Activated naive CD4-positive, alpha-beta T cell treated with anti-CD3 and anti-CD28 coated beads for 36 hours (primary cell): ENCODE measurements at regions of chr5 and their contacts with region 1.

Region 1: GRCh38 chr5:168987543-168988300 is 313.2 kb downstream of the SLIT3 start:
- DNase-seq: peak; percentile 77
- H3K4me3 Mint-ChIP-seq: no peak overlapping the region
- H3K27ac Mint-ChIP-seq: no peak overlapping the region
- H3K4me1 Mint-ChIP-seq: no peaks in the 10 kb centered on the region
- H3K27me3 Mint-ChIP-seq: peaks cover 6% of the 10 kb centered on the region

Region 2: GRCh38 chr5:169548315-169548714 is 560.6 kb after region 1 on chr5:
- CTCF ChIA-PET with region 1: interaction called, 4 read pairs
- intact Hi-C with region 1: loop called (anchors 1 kb)
- DNase-seq: no peak
- H3K4me3 Mint-ChIP-seq: no peak overlapping the region
- H3K27ac Mint-ChIP-seq: no peak overlapping the region
- H3K4me1 Mint-ChIP-seq: peaks cover 9% of the 10 kb centered on the region
- H3K27me3 Mint-ChIP-seq: peaks cover 59% of the 10 kb centered on the region